ENCODE measurements at regions of chr7 and their contacts with region 1.

Region 1: GRCh38 chr7:63925623-63926460 is 72.8 kb upstream of the ZNF722 start:
- DNase-seq: peak; percentile 88
- ATAC-seq: peak; percentile 95
- H3K4me3 Mint-ChIP-seq: peak overlapping the region; percentile 93
- H3K27ac Mint-ChIP-seq: peak overlapping the region; percentile 96
- H3K4me1 Mint-ChIP-seq: peaks cover 4% of the 10 kb centered on the region
- H3K27me3 Mint-ChIP-seq: no peaks in the 10 kb centered on the region

Region 2: GRCh38 chr7:63867127-63867526 is 58.7 kb before region 1 on chr7:
- POLR2A ChIA-PET with region 1: no interaction called
- DNase-seq: no peak
- ATAC-seq: no peak
- H3K4me3 Mint-ChIP-seq: no peak overlapping the region
- H3K27ac Mint-ChIP-seq: no peak overlapping the region
- H3K4me1 Mint-ChIP-seq: no peaks in the 10 kb centered on the region
- H3K27me3 Mint-ChIP-seq: no peaks in the 10 kb centered on the region

Region 3: DNA sequence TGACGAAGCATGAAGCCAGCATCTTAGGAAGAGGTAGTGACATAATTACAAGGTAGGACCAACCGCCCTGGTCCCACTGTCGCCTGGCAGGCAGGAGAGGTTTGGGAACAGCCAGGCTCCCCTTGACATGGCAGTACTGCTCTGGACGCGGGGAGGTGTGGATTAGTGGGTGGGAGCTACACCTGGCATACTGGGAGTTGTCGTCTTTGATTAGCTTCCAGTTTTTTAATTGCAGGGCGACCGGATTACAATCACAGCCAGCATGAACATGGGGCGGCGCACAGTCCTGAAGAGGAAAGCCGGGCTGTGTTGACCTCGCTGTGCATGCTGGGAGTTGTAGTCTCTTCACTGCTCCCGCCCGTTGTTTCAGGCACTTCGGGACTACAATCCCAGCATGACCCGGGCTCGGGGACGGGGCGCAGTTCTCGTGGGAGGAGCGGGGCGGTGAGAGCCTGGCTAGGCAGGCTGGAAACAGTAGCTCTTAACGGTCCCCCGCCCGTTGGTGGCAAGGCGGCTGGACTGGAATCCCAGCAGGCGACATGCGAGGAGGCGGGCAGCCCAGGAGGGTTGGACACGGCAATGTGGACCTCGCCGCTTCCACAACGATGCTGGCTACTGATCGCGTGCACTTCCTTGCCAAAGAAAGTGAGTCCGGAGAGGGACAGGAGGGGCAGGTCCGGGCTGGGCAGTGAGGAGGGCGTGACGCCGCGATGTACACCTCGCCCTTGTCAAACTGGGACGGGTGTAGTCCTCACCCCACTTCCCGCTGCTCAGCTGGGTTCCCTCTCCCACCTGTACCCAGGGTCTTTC is 25.2 kb before region 1 on chr7:
- POLR2A ChIA-PET with region 1: interaction called, 35 read pairs
- DNase-seq: peak; percentile 84
- ATAC-seq: peak; percentile 94
- H3K4me3 Mint-ChIP-seq: peak overlapping the region; percentile 99
- H3K27ac Mint-ChIP-seq: peak overlapping the region; percentile 88
- H3K4me1 Mint-ChIP-seq: peaks cover 7% of the 10 kb centered on the region
- H3K27me3 Mint-ChIP-seq: no peaks in the 10 kb centered on the region

Region 4: GRCh38 chr7:64307254-64308015 is 381.6 kb after region 1 on chr7:
- POLR2A ChIA-PET with region 1: interaction called, 10 read pairs
- DNase-seq: peak; percentile 87
- ATAC-seq: peak; percentile 100
- H3K4me3 Mint-ChIP-seq: peak overlapping the region; percentile 98
- H3K27ac Mint-ChIP-seq: peak overlapping the region; percentile 98
- H3K4me1 Mint-ChIP-seq: peaks cover 8% of the 10 kb centered on the region
- H3K27me3 Mint-ChIP-seq: no peaks in the 10 kb centered on the region

Measured in activated naive CD8-positive, alpha-beta T cell treated with anti-CD3 and anti-CD28 coated beads, Interleukin-2, amount 10 ng/mL, durations not matched to agents 7 days and 5 days (primary cell).